Mammary epithelial cell (primary cell): ENCODE measurements at regions of chr16 and their contacts with region 1.

Region 1: GRCh38 chr16:50102051-50102746 is 36.4 kb downstream of the HEATR3 start:
- DNase-seq: peak; percentile 58
- H3K4me3 ChIP-seq: no peak overlapping the region
- H3K27ac ChIP-seq: peak overlapping the region; percentile 24
- H3K4me1 ChIP-seq: peaks cover 17% of the 10 kb centered on the region
- H3K27me3 ChIP-seq: no peaks in the 10 kb centered on the region
- CTCF ChIP-seq: no peak

Region 2: DNA sequence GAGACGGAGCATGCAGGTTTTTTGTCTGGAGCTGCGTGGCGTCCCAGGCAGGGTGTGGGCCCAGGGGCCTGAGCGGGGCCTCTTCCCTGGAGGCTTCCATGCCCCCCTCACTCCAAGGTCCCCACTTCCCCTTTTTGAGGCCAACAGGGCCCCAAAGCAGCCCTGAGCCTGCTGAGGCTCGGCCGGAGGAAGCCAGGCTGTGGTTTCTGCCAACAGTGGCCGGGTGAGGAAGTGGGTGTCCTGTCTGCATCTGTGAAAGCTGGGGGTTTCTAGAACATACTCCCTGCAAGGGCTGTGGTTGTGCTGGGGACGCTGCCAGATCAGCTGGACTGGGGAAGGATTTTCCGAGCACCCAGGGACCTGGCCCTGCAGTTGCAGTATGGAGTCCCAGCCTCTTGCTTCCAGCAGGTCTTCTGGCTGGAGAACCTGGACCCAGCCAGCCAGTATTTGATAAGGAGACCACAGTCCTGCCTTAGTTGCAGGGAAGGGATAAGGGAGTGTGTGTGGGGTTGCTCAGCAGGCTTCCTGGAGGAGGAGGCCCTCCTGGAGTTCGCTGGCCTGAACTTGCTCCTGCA is 179.9 kb after region 1 on chr16:
- CTCF ChIA-PET with region 1: no interaction called
- dilution Hi-C with region 1: loop called (anchors 10 kb)
- in situ Hi-C with region 1: no loop called
- intact Hi-C with region 1: no loop called
- DNase-seq: no peak
- H3K4me3 ChIP-seq: no peak overlapping the region
- H3K27ac ChIP-seq: no peak overlapping the region
- H3K4me1 ChIP-seq: no peaks in the 10 kb centered on the region
- H3K27me3 ChIP-seq: no peaks in the 10 kb centered on the region
- CTCF ChIP-seq: no peak